ENCODE measurements at regions of chr9 and their contacts with region 1.

Region 1: GRCh38 chr9:19028835-19029451 is 4.1 kb downstream of the SAXO1 start:
- DNase-seq: no peak

Region 2: GRCh38 chr9:17810728-17811571 is 1218.0 kb before region 1 on chr9:
- intact Hi-C with region 1: loop called in 1 of 2 experiments (anchors 10 kb)
- DNase-seq: no peak

Region 3: GRCh38 chr9:18250053-18250452 is 778.9 kb before region 1 on chr9:
- intact Hi-C with region 1: loop called in 1 of 2 experiments (anchors 5 kb)
- DNase-seq: no peak

Region 4: GRCh38 chr9:18442629-18443491 is 586.1 kb before region 1 on chr9:
- intact Hi-C with region 1: loop called (anchors 10 kb)
- DNase-seq: peak; percentile 87

Measured in posterior vena cava (tissue), 2 donors.